ENCODE measurements at regions of chrX and their contacts with region 1.

Region 1: GRCh38 chrX:13487731-13488523 is 81.5 kb upstream of the EGFL6 start:
- DNase-seq: peak; percentile 64
- H3K4me3 ChIP-seq: no peak overlapping the region
- H3K27ac ChIP-seq: peak overlapping the region; percentile 63 to 76 (median 65)
- H3K4me1 ChIP-seq: peaks cover 0 to 11% (median 0%) of the 10 kb centered on the region in 4 donors
- H3K27me3 ChIP-seq: no peaks in the 10 kb centered on the region
- CTCF ChIP-seq: peak; percentile 55 to 79 (median 68)
- EP300 ChIP-seq: no peak
- POLR2A ChIP-seq: no peak

Region 2: GRCh38 chrX:12798601-12799000 is 689.3 kb before region 1 on chrX:
- intact Hi-C with region 1: no loop called
- DNase-seq: no peak
- H3K4me3 ChIP-seq: no peak overlapping the region
- H3K27ac ChIP-seq: no peak overlapping the region
- H3K4me1 ChIP-seq: peaks cover 0 to 11% (median 0%) of the 10 kb centered on the region in 4 donors
- H3K27me3 ChIP-seq: no peaks in the 10 kb centered on the region
- CTCF ChIP-seq: no peak
- EP300 ChIP-seq: no peak
- POLR2A ChIP-seq: no peak

Region 3: GRCh38 chrX:12946838-12947544 is 540.9 kb before region 1 on chrX:
- intact Hi-C with region 1: loop called (anchors 5 kb)
- DNase-seq: peak; percentile 83
- H3K4me3 ChIP-seq: no peak overlapping the region
- H3K27ac ChIP-seq: peak overlapping the region in 2 of 4 donors; percentile 22 to 45
- H3K4me1 ChIP-seq: peaks cover 0 to 14% (median 2%) of the 10 kb centered on the region in 4 donors
- H3K27me3 ChIP-seq: no peaks in the 10 kb centered on the region
- CTCF ChIP-seq: peak; percentile 53 to 90 (median 65)
- EP300 ChIP-seq: no peak
- POLR2A ChIP-seq: no peak

Region 4: DNA sequence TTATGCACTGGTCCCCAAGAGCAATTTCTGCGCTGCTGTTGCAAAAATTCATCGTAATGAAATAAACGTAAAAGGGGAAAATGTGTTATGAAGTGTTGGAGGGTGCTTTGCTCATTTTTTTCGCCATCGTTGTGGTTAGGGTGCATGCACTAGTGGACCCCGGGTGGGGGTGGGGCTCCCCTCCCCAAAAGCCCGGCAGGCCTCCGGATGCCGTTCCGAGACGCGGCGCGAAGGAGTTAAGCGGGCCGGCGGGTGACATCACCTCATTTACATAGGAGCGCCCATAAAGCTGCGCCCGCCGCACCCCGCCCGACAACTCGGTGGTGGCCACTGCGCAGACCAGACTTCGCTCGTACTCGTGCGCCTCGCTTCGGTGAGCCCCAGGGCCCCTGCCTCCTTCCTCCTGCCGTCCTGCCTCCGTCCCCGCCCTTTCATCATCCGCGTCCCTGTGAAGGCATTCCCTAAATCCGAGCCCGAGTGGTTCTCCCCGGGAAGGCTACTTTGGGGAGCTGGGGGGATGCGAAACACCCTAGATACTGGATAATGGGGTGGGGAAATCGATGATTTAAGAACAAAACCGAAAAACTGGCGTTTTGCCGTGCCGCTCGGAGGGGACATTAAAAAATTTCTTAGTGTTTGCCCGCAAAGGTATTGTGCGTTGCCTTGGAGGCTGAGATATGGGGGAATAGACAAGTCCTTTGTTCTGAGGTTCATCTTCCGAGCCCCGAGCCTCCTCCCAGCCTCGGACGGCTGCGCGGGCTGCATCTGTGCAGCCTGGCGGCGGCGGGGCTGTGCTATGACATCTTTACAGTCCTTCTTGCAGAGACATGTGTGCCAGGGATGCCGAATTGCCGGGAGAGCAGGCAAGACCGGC is 512.9 kb before region 1 on chrX and contains the start of gene TMSB4X:
- intact Hi-C with region 1: loop called (anchors 2 kb)
- DNase-seq: peak; percentile 93
- H3K4me3 ChIP-seq: peak within 1 kb of the TSS; percentile 57 to 73 (median 68)
- H3K27ac ChIP-seq: peak within 1 kb of the TSS; percentile 87 to 92 (median 90)
- H3K4me1 ChIP-seq: no peaks in the 10 kb centered on the region
- H3K27me3 ChIP-seq: peaks cover 0 to 3% (median 0%) of the 10 kb centered on the region in 3 donors
- CTCF ChIP-seq: no peak
- EP300 ChIP-seq: no peak
- POLR2A ChIP-seq: peak; percentile 91 to 96
- total RNA-seq, gene TMSB4X: 1,233 to 1,969 (median 1,534) TPM

Region 5: GRCh38 chrX:13087322-13088155 is 400.4 kb before region 1 on chrX:
- intact Hi-C with region 1: loop called (anchors 10 kb)
- DNase-seq: no peak
- H3K4me3 ChIP-seq: no peak overlapping the region
- H3K27ac ChIP-seq: no peak overlapping the region
- H3K4me1 ChIP-seq: no peaks in the 10 kb centered on the region
- H3K27me3 ChIP-seq: no peaks in the 10 kb centered on the region
- CTCF ChIP-seq: no peak
- EP300 ChIP-seq: no peak
- POLR2A ChIP-seq: no peak

Region 6: GRCh38 chrX:13432414-13433297 is 55.3 kb before region 1 on chrX:
- intact Hi-C with region 1: loop called (anchors 10 kb)
- DNase-seq: peak; percentile 86
- H3K4me3 ChIP-seq: no peak overlapping the region
- H3K27ac ChIP-seq: peak overlapping the region; percentile 61 to 81 (median 73)
- H3K4me1 ChIP-seq: peaks cover 0 to 15% (median 9%) of the 10 kb centered on the region in 4 donors
- H3K27me3 ChIP-seq: no peaks in the 10 kb centered on the region
- CTCF ChIP-seq: no peak
- EP300 ChIP-seq: peak; percentile 35 to 86 (median 54)
- POLR2A ChIP-seq: no peak

Region 7: DNA sequence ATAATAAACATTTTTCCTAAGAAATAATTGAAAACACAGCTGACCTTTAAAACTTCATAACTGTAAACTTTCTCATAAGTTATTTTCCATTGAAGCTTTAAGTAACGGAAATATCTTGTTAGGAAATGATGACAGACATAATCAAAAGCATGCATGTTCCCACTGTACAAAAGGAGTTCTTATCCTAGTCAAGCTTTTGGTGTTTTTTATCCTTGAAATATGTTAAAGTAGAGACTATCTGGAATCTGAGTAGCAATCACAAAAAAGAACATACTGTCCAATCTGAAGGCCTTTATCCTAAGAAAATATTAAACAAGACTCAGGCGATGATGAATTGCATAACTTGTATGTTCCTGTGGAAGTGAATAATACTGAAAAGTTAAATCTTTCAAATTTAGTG is 527.4 kb after region 1 on chrX:
- intact Hi-C with region 1: no loop called
- DNase-seq: no peak
- H3K4me3 ChIP-seq: no peak overlapping the region
- H3K27ac ChIP-seq: no peak overlapping the region
- H3K4me1 ChIP-seq: no peaks in the 10 kb centered on the region
- H3K27me3 ChIP-seq: no peaks in the 10 kb centered on the region
- CTCF ChIP-seq: no peak
- EP300 ChIP-seq: no peak
- POLR2A ChIP-seq: no peak

Measured in sigmoid colon (tissue), 7 donors.